ENCODE measurements at regions of chr12 and their contacts with region 1.

Region 1: GRCh38 chr12:111396726-111397445 is 8.8 kb upstream of the SH2B3 start:
- DNase-seq: peak; percentile 89
- ATAC-seq: peak; percentile 94
- H3K4me3 Mint-ChIP-seq: peak overlapping the region; percentile 68
- H3K27ac Mint-ChIP-seq: peak overlapping the region; percentile 81
- H3K4me1 Mint-ChIP-seq: peaks cover 32% of the 10 kb centered on the region
- H3K27me3 Mint-ChIP-seq: no peaks in the 10 kb centered on the region

Region 2: GRCh38 chr12:111330800-111331752 is 65.8 kb before region 1 on chr12:
- CTCF ChIA-PET with region 1: interaction called, 11 read pairs
- POLR2A ChIA-PET with region 1: no interaction called
- DNase-seq: no peak
- ATAC-seq: peak; percentile 27
- H3K4me3 Mint-ChIP-seq: no peak overlapping the region
- H3K27ac Mint-ChIP-seq: no peak overlapping the region
- H3K4me1 Mint-ChIP-seq: no peaks in the 10 kb centered on the region
- H3K27me3 Mint-ChIP-seq: peaks cover 3% of the 10 kb centered on the region

Region 3: GRCh38 chr12:111384596-111384995 is 12.3 kb before region 1 on chr12:
- CTCF ChIA-PET with region 1: interaction called, 29 read pairs
- POLR2A ChIA-PET with region 1: interaction called, 3 read pairs
- DNase-seq: no peak
- ATAC-seq: no peak
- H3K4me3 Mint-ChIP-seq: no peak overlapping the region
- H3K27ac Mint-ChIP-seq: no peak overlapping the region
- H3K4me1 Mint-ChIP-seq: no peaks in the 10 kb centered on the region
- H3K27me3 Mint-ChIP-seq: peaks cover 6% of the 10 kb centered on the region

Region 4: DNA sequence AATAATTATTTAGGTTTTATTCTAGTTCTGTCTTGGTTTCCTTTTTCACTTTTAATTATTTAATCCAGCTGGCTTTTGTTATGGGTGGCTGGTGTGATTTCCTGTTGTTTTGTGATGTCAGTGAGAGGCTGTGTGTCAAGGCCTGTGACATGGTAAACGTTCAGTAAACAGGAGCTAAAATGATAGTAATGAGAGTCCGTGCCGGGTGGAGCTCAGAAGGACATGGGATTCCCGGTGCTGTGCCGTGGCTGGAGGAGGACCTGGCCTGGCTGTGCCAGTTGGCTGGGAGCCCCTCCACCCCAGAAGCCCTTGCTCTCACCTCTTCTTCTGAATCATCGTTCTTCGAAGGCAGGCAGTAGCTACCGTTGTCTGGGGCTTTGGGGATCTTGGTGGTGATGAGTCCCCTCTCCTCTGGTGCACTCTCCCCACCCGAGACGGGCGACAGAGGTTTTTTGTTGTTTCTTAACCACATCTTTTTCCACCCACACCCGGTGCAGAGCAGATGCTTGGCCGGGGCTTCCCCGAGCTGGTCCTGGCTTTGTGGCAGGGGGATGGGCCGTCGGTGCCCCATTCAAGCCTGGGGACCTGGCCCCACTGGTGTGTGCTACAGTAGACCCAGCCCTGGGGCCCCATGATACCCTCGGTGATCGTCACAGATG is 37.9 kb after region 1 on chr12:
- CTCF ChIA-PET with region 1: interaction called, 1,088 read pairs
- POLR2A ChIA-PET with region 1: interaction called, 8 read pairs
- DNase-seq: peak; percentile 89
- ATAC-seq: peak; percentile 66
- H3K4me3 Mint-ChIP-seq: peak overlapping the region; percentile 75
- H3K27ac Mint-ChIP-seq: peak overlapping the region; percentile 99
- H3K4me1 Mint-ChIP-seq: peaks cover 97% of the 10 kb centered on the region
- H3K27me3 Mint-ChIP-seq: no peaks in the 10 kb centered on the region

Region 5: GRCh38 chr12:111471236-111471635 is 74.3 kb after region 1 on chr12:
- CTCF ChIA-PET with region 1: interaction called, 18 read pairs
- POLR2A ChIA-PET with region 1: no interaction called
- DNase-seq: no peak
- ATAC-seq: no peak
- H3K4me3 Mint-ChIP-seq: no peak overlapping the region
- H3K27ac Mint-ChIP-seq: no peak overlapping the region
- H3K4me1 Mint-ChIP-seq: no peaks in the 10 kb centered on the region
- H3K27me3 Mint-ChIP-seq: no peaks in the 10 kb centered on the region

Region 6: GRCh38 chr12:111505601-111506036 is 108.7 kb after region 1 on chr12:
- CTCF ChIA-PET with region 1: interaction called, 12 read pairs
- POLR2A ChIA-PET with region 1: no interaction called
- DNase-seq: peak; percentile 45
- ATAC-seq: peak; percentile 83
- H3K4me3 Mint-ChIP-seq: no peak overlapping the region
- H3K27ac Mint-ChIP-seq: peak overlapping the region; percentile 69
- H3K4me1 Mint-ChIP-seq: peaks cover 14% of the 10 kb centered on the region
- H3K27me3 Mint-ChIP-seq: no peaks in the 10 kb centered on the region

Region 7: GRCh38 chr12:111685744-111686517 is 289.0 kb after region 1 on chr12 and contains the starts of genes ACAD10 and BRAP:
- CTCF ChIA-PET with region 1: interaction called, 14 read pairs
- POLR2A ChIA-PET with region 1: interaction called, 3 read pairs
- DNase-seq: peak; percentile 94
- ATAC-seq: peak; percentile 96
- H3K4me3 Mint-ChIP-seq: peak within 1 kb of the TSS; percentile 97
- H3K27ac Mint-ChIP-seq: peak within 1 kb of the TSS; percentile 97
- H3K4me1 Mint-ChIP-seq: peaks cover 31% of the 10 kb centered on the region
- H3K27me3 Mint-ChIP-seq: no peaks in the 10 kb centered on the region
- total RNA-seq, gene ACAD10: 24.9 to 27.3 TPM
- total RNA-seq, gene BRAP: 19.6 to 20.4 TPM